Vagina (tissue), 2 donors: ENCODE measurements at regions of chr5 and their contacts with region 1.

Region 1: GRCh38 chr5:89712134-89712700 is 697.3 kb downstream of the CETN3 start:
- DNase-seq: no peak
- H3K4me3 ChIP-seq: no peak overlapping the region
- H3K27ac ChIP-seq: no peak overlapping the region
- H3K4me1 ChIP-seq: no peaks in the 10 kb centered on the region
- H3K27me3 ChIP-seq: no peaks in the 10 kb centered on the region
- CTCF ChIP-seq: no peak
- POLR2A ChIP-seq: no peak

Region 2: GRCh38 chr5:89755024-89755423 is 42.8 kb after region 1 on chr5:
- intact Hi-C with region 1: loop called (anchors 1 kb)
- DNase-seq: no peak
- H3K4me3 ChIP-seq: no peak overlapping the region
- H3K27ac ChIP-seq: no peak overlapping the region
- H3K4me1 ChIP-seq: no peaks in the 10 kb centered on the region
- H3K27me3 ChIP-seq: no peaks in the 10 kb centered on the region
- CTCF ChIP-seq: no peak
- POLR2A ChIP-seq: no peak